ENCODE measurements at regions of chr3 and their contacts with region 1.

Region 1: DNA sequence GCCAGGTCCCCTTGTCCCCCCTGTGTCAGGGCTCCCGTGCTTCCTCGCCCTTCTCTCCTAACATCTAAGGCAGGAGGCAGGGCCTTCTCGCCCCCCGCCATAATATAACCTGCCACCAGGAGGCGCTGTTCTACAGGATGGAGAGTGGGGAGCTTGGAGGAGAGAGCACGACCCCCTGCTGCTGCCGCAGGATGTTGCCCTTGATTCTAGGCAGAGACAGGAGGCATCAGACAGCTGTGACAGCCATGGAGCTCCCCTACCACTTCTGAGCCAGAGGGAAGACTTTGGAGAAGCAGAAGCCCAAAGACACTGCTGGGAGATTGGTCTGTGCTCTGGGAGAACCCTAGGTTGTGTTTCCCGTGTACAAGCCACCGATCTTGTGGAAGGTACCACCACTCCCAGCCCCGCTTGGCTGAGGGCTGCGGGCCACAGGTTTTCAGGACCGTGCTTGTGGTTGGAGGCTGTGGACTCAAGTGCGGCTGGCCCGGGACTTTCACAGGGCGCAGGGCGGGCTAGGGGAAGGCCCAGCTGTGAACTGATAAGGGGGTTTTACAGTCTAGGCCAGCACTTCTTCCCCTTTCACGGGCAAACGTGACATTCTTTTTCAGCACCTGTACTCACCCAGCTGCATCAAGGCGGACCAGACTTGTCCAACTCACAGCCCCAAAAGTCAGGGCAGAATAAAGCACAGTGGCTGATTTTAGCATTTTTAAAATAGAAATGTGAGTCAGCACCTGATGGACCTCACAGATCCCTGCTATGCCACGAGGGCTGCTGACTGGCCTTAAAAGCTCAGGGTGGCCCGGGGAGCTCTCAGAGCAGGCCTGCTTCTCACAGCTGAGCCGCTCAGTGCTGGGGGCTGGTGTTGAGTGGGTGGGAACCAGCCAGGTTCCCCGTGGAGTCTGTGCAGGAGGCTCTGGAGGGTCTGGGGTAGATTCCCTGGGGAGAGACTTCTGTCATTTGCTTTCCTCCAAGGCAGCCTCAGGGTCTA is 2.6 kb upstream of the TIGIT start:
- DNase-seq: no peak
- H3K4me3 ChIP-seq: no peak overlapping the region
- H3K27ac ChIP-seq: peak overlapping the region; percentile 30
- H3K4me1 ChIP-seq: no peaks in the 10 kb centered on the region
- H3K27me3 ChIP-seq: no peaks in the 10 kb centered on the region
- CTCF ChIP-seq: peak; percentile 38 to 59 (median 45)
- POLR2A ChIP-seq: no peak

Region 2: DNA sequence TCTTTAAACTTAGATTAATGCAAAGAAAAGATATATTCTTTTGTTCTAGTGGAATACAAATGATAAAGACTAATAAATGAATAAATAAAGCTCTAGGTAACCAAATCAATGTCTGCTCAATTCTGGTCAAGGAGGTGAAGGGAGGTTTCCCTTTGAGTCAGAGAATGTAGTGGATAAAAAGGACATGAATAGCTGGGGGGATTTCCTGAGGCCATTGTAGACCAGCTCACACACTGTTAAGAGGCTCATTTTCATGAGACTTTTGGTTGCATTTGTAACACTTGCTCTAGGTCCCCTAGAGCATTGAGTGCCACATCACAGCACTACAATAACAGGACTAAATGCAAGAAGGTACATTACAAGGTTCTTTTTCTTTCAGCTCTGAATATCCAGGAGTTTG is 173.3 kb after region 1 on chr3:
- intact Hi-C with region 1: loop called (anchors 5 kb)
- DNase-seq: no peak
- H3K4me3 ChIP-seq: no peak overlapping the region
- H3K27ac ChIP-seq: no peak overlapping the region
- H3K4me1 ChIP-seq: no peaks in the 10 kb centered on the region
- H3K27me3 ChIP-seq: no peaks in the 10 kb centered on the region
- CTCF ChIP-seq: no peak
- POLR2A ChIP-seq: no peak